CD8-positive, alpha-beta T cell (primary cell): ENCODE measurements at regions of chr6 and their contacts with region 1.

Region 1: GRCh38 chr6:26196846-26197648 is 109.8 kb downstream of the HFE start:
- DNase-seq: peak; percentile 53 to 95 (median 79)
- ATAC-seq: peak; percentile 57
- H3K4me3 ChIP-seq: peak overlapping the region; percentile 78 to 82
- H3K4me3 Mint-ChIP-seq: peak overlapping the region; percentile 96
- H3K27ac ChIP-seq: peak overlapping the region; percentile 88 to 89
- H3K27ac Mint-ChIP-seq: peak overlapping the region; percentile 99
- H3K4me1 ChIP-seq: peaks cover 20% of the 10 kb centered on the region
- H3K4me1 Mint-ChIP-seq: peaks cover 44% of the 10 kb centered on the region
- H3K27me3 ChIP-seq: no peaks in the 10 kb centered on the region
- H3K27me3 Mint-ChIP-seq: no peaks in the 10 kb centered on the region
- CTCF ChIP-seq: no peak

Region 2: GRCh38 chr6:25537349-25538018 is 659.6 kb before region 1 on chr6:
- CTCF ChIA-PET with region 1: no interaction called
- POLR2A ChIA-PET with region 1: no interaction called
- intact Hi-C with region 1: no loop called
- DNase-seq: no peak
- ATAC-seq: no peak
- H3K4me3 ChIP-seq: no peak overlapping the region
- H3K4me3 Mint-ChIP-seq: no peak overlapping the region
- H3K27ac ChIP-seq: no peak overlapping the region
- H3K27ac Mint-ChIP-seq: no peak overlapping the region
- H3K4me1 ChIP-seq: no peaks in the 10 kb centered on the region
- H3K4me1 Mint-ChIP-seq: no peaks in the 10 kb centered on the region
- H3K27me3 ChIP-seq: no peaks in the 10 kb centered on the region
- H3K27me3 Mint-ChIP-seq: no peaks in the 10 kb centered on the region
- CTCF ChIP-seq: no peak

Region 3: DNA sequence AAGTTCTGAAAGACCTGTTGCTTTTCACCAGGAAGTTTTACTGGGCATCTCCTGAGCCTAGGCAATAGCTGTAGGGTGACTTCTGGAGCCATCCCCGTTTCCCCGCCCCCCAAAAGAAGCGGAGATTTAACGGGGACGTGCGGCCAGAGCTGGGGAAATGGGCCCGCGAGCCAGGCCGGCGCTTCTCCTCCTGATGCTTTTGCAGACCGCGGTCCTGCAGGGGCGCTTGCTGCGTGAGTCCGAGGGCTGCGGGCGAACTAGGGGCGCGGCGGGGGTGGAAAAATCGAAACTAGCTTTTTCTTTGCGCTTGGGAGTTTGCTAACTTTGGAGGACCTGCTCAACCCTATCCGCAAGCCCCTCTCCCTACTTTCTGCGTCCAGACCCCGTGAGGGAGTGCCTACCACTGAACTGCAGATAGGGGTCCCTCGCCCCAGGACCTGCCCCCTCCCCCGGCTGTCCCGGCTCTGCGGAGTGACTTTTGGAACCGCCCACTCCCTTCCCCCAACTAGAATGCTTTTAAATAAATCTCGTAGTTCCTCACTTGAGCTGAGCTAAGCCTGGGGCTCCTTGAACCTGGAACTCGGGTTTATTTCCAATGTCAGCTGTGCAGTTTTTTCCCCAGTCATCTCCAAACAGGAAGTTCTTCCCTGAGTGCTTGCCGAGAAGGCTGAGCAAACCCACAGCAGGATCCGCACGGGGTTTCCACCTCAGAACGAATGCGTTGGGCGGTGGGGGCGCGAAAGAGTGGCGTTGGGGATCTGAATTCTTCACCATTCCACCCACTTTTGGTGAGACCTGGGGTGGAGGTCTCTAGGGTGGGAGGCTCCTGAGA is 109.5 kb before region 1 on chr6 and contains the start of gene HFE:
- CTCF ChIA-PET with region 1: no interaction called
- POLR2A ChIA-PET with region 1: interaction called, 13 read pairs
- intact Hi-C with region 1: no loop called
- DNase-seq: peak in 7 of 9 experiments; percentile 10 to 59 (median 40)
- ATAC-seq: peak; percentile 35
- H3K4me3 ChIP-seq: peak within 1 kb of the TSS; percentile 75 to 84
- H3K4me3 Mint-ChIP-seq: peak within 1 kb of the TSS; percentile 88
- H3K27ac ChIP-seq: peak within 1 kb of the TSS; percentile 56 to 60
- H3K27ac Mint-ChIP-seq: peak within 1 kb of the TSS; percentile 81
- H3K4me1 ChIP-seq: peaks cover 27% of the 10 kb centered on the region
- H3K4me1 Mint-ChIP-seq: peaks cover 36% of the 10 kb centered on the region
- H3K27me3 ChIP-seq: peaks cover 0 to 2% of the 10 kb centered on the region in 2 experiments
- H3K27me3 Mint-ChIP-seq: no peaks in the 10 kb centered on the region
- CTCF ChIP-seq: no peak
- total RNA-seq, gene HFE: 0.30 to 0.44 TPM

Region 4: GRCh38 chr6:26183581-26184366 is 13.3 kb before region 1 on chr6:
- CTCF ChIA-PET with region 1: interaction called, 40 read pairs
- POLR2A ChIA-PET with region 1: interaction called, 604 read pairs
- intact Hi-C with region 1: no loop called
- DNase-seq: peak in 7 of 9 experiments; percentile 33 to 90 (median 59)
- ATAC-seq: peak; percentile 88
- H3K4me3 ChIP-seq: peak overlapping the region; percentile 60 to 71
- H3K4me3 Mint-ChIP-seq: peak overlapping the region; percentile 100
- H3K27ac ChIP-seq: peak overlapping the region; percentile 61 to 76
- H3K27ac Mint-ChIP-seq: peak overlapping the region; percentile 99
- H3K4me1 ChIP-seq: peaks cover 20% of the 10 kb centered on the region
- H3K4me1 Mint-ChIP-seq: peaks cover 42% of the 10 kb centered on the region
- H3K27me3 ChIP-seq: no peaks in the 10 kb centered on the region
- H3K27me3 Mint-ChIP-seq: no peaks in the 10 kb centered on the region
- CTCF ChIP-seq: no peak

Region 5: GRCh38 chr6:26240154-26241032 is 43.3 kb after region 1 on chr6:
- CTCF ChIA-PET with region 1: no interaction called
- POLR2A ChIA-PET with region 1: interaction called, 428 read pairs
- intact Hi-C with region 1: no loop called
- DNase-seq: peak; percentile 40 to 93 (median 67)
- ATAC-seq: peak; percentile 81
- H3K4me3 ChIP-seq: peak overlapping the region; percentile 50 to 62
- H3K4me3 Mint-ChIP-seq: peak overlapping the region; percentile 88
- H3K27ac ChIP-seq: peak overlapping the region; percentile 74 to 88
- H3K27ac Mint-ChIP-seq: peak overlapping the region; percentile 98
- H3K4me1 ChIP-seq: peaks cover 8% of the 10 kb centered on the region
- H3K4me1 Mint-ChIP-seq: peaks cover 21% of the 10 kb centered on the region
- H3K27me3 ChIP-seq: no peaks in the 10 kb centered on the region
- H3K27me3 Mint-ChIP-seq: no peaks in the 10 kb centered on the region
- CTCF ChIP-seq: no peak

Region 6: GRCh38 chr6:26537846-26538571 is 341.0 kb after region 1 on chr6 and contains the start of gene HMGN4:
- CTCF ChIA-PET with region 1: no interaction called
- POLR2A ChIA-PET with region 1: interaction called, 13 read pairs
- intact Hi-C with region 1: no loop called
- DNase-seq: peak; percentile 65 to 96 (median 79)
- ATAC-seq: peak; percentile 69
- H3K4me3 ChIP-seq: peak within 1 kb of the TSS; percentile 66 to 99
- H3K4me3 Mint-ChIP-seq: peak within 1 kb of the TSS; percentile 89
- H3K27ac ChIP-seq: peak within 1 kb of the TSS; percentile 88 to 93
- H3K27ac Mint-ChIP-seq: peak within 1 kb of the TSS; percentile 92
- H3K4me1 ChIP-seq: peaks cover 32% of the 10 kb centered on the region
- H3K4me1 Mint-ChIP-seq: peaks cover 58% of the 10 kb centered on the region
- H3K27me3 ChIP-seq: no peaks in the 10 kb centered on the region
- H3K27me3 Mint-ChIP-seq: no peaks in the 10 kb centered on the region
- CTCF ChIP-seq: no peak
- total RNA-seq, gene HMGN4: 24.8 to 33.7 TPM

Region 7: GRCh38 chr6:27838058-27838944 is 1641.3 kb after region 1 on chr6:
- CTCF ChIA-PET with region 1: no interaction called
- POLR2A ChIA-PET with region 1: interaction called, 60 read pairs
- intact Hi-C with region 1: no loop called
- DNase-seq: peak; percentile 61 to 98 (median 74)
- ATAC-seq: peak; percentile 70
- H3K4me3 ChIP-seq: peak overlapping the region; percentile 64 to 76
- H3K4me3 Mint-ChIP-seq: no peak overlapping the region
- H3K27ac ChIP-seq: peak overlapping the region; percentile 91 to 98
- H3K27ac Mint-ChIP-seq: no peak overlapping the region
- H3K4me1 ChIP-seq: peaks cover 35% of the 10 kb centered on the region
- H3K4me1 Mint-ChIP-seq: peaks cover 21% of the 10 kb centered on the region
- H3K27me3 ChIP-seq: peaks cover 0 to 4% of the 10 kb centered on the region in 2 experiments
- H3K27me3 Mint-ChIP-seq: peaks cover 7% of the 10 kb centered on the region
- CTCF ChIP-seq: no peak